Caco-2 (cell line): ENCODE measurements at regions of chr4 and their contacts with region 1.

Region 1: DNA sequence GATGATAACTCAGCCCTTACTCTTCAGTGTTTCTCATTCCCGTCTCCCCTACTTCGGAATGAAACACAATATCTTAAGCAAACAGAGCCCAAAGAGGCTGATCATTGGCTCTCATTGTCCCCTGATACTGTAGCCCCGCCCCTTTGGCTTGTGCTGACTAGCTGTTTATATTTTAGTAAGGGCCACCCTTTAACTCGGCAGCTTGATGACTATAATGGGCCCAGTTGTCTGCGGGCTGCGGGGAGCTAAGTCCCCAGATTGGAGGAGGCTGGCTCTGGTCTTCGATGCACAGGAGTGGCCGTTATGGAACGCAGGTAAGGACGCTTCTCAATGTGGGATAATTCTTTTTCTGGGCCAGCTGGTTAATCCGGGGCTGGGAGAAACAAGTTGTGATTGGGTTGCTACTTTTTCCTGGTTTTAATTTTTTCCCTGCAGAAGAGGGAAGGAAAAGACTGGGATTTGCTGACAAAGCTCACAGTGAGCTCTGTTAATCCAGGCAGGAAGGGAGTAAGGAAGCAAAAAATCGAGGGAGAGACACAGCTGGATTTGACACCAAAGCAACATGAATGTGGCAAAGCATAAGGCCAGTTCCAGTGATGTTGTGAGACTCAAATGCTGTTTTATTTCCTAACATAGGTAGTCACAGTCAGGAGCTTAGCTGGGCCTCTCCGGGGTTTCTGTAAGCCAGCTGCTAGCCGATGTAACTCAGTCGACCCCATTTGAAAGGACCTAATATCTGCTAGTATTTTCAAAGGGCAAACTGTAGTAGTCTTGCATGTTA is at the start of gene TRIM2:
- DNase-seq: peak; percentile 85 to 91
- H3K4me3 ChIP-seq: peak within 1 kb of the TSS; percentile 73
- H3K4me3 Mint-ChIP-seq: peak within 1 kb of the TSS; percentile 96
- H3K27ac Mint-ChIP-seq: peak within 1 kb of the TSS; percentile 87
- H3K4me1 ChIP-seq: peaks cover 44% of the 10 kb centered on the region
- H3K4me1 Mint-ChIP-seq: peaks cover 21% of the 10 kb centered on the region
- H3K27me3 ChIP-seq: no peaks in the 10 kb centered on the region
- H3K27me3 Mint-ChIP-seq: no peaks in the 10 kb centered on the region
- CTCF ChIP-seq: no peak
- total RNA-seq, gene TRIM2: 62.0 and 62.3 TPM in 2 replicates

Region 2: DNA sequence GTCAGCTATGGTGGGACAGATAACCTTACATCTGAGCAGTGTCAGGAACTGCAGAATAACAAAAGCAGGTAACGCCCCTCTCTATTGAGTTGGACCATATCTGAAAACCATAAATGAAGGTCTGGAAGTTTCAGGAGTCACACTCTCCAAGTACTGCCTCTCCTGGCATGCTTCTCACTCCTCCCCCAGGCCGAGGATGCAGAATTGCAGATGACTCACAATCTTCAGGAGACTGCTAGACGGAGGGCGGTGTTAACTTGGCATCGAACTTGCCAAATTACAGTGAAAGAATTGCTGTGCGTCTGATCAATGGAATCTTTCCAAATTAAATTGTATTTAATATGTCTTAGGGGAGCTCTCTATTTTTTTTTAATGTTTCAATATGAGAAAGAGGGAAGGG is 67.3 kb before region 1 on chr4:
- CTCF ChIA-PET with region 1: interaction called, 5 read pairs
- POLR2A ChIA-PET with region 1: no interaction called
- intact Hi-C with region 1: loop called (anchors 2 kb)
- DNase-seq: no peak
- H3K4me3 ChIP-seq: no peak overlapping the region
- H3K4me3 Mint-ChIP-seq: no peak overlapping the region
- H3K27ac Mint-ChIP-seq: no peak overlapping the region
- H3K4me1 ChIP-seq: peaks cover 18% of the 10 kb centered on the region
- H3K4me1 Mint-ChIP-seq: peaks cover 25% of the 10 kb centered on the region
- H3K27me3 ChIP-seq: no peaks in the 10 kb centered on the region
- H3K27me3 Mint-ChIP-seq: no peaks in the 10 kb centered on the region
- CTCF ChIP-seq: no peak

Region 3: GRCh38 chr4:153153339-153153871 is 51.0 kb before region 1 on chr4:
- CTCF ChIA-PET with region 1: interaction called, 3 read pairs
- POLR2A ChIA-PET with region 1: no interaction called
- intact Hi-C with region 1: loop called (anchors 2 kb)
- DNase-seq: peak; percentile 53 to 70
- H3K4me3 ChIP-seq: peak overlapping the region; percentile 64
- H3K4me3 Mint-ChIP-seq: peak overlapping the region; percentile 89
- H3K27ac Mint-ChIP-seq: no peak overlapping the region
- H3K4me1 ChIP-seq: 0 out of 2 replicates have a peak, but pooled peaks cover 9% of the 10 kb centered on the region
- H3K4me1 Mint-ChIP-seq: peaks cover 14% of the 10 kb centered on the region
- H3K27me3 ChIP-seq: no peaks in the 10 kb centered on the region
- H3K27me3 Mint-ChIP-seq: peaks cover 2% of the 10 kb centered on the region
- CTCF ChIP-seq: no peak

Region 4: GRCh38 chr4:153241970-153242838 is 37.8 kb after region 1 on chr4:
- CTCF ChIA-PET with region 1: interaction called, 3 read pairs
- POLR2A ChIA-PET with region 1: no interaction called
- intact Hi-C with region 1: loop called (anchors 1 kb)
- DNase-seq: peak in 1 of 2 experiments; percentile 22
- H3K4me3 ChIP-seq: no peak overlapping the region
- H3K4me3 Mint-ChIP-seq: no peak overlapping the region
- H3K27ac Mint-ChIP-seq: peak overlapping the region; percentile 83
- H3K4me1 ChIP-seq: peaks cover 33% of the 10 kb centered on the region
- H3K4me1 Mint-ChIP-seq: peaks cover 42% of the 10 kb centered on the region
- H3K27me3 ChIP-seq: no peaks in the 10 kb centered on the region
- H3K27me3 Mint-ChIP-seq: no peaks in the 10 kb centered on the region
- CTCF ChIP-seq: no peak

Region 5: GRCh38 chr4:153318696-153319320 is 114.4 kb after region 1 on chr4:
- CTCF ChIA-PET with region 1: no interaction called
- POLR2A ChIA-PET with region 1: no interaction called
- intact Hi-C with region 1: loop called (anchors 1 kb)
- DNase-seq: peak in 1 of 2 experiments; percentile 56
- H3K4me3 ChIP-seq: no peak overlapping the region
- H3K4me3 Mint-ChIP-seq: no peak overlapping the region
- H3K27ac Mint-ChIP-seq: no peak overlapping the region
- H3K4me1 ChIP-seq: no peaks in the 10 kb centered on the region
- H3K4me1 Mint-ChIP-seq: no peaks in the 10 kb centered on the region
- H3K27me3 ChIP-seq: no peaks in the 10 kb centered on the region
- H3K27me3 Mint-ChIP-seq: no peaks in the 10 kb centered on the region
- CTCF ChIP-seq: peak; percentile 38 to 77